SK-N-SH (cell line): ENCODE measurements at regions of chr17 and their contacts with region 1.

Region 1: GRCh38 chr17:28405632-28406472 is at the start of gene SLC46A1:
- DNase-seq: peak; percentile 91
- H3K4me3 ChIP-seq: peak within 1 kb of the TSS; percentile 60 to 88
- H3K27ac ChIP-seq: peak within 1 kb of the TSS; percentile 16 to 56; a peak in 3 of 4 replicates
- H3K4me1 ChIP-seq: peaks cover 10 to 16% of the 10 kb centered on the region in 2 experiments; a peak in 2 of 4 replicates
- H3K27me3 ChIP-seq: no peaks in the 10 kb centered on the region
- CTCF ChIP-seq: no peak
- EP300 ChIP-seq: no peak
- RAD21 ChIP-seq: no peak
- polyA plus RNA-seq, gene SLC46A1: 4.2 and 4.3 TPM in 2 replicates

Region 2: DNA sequence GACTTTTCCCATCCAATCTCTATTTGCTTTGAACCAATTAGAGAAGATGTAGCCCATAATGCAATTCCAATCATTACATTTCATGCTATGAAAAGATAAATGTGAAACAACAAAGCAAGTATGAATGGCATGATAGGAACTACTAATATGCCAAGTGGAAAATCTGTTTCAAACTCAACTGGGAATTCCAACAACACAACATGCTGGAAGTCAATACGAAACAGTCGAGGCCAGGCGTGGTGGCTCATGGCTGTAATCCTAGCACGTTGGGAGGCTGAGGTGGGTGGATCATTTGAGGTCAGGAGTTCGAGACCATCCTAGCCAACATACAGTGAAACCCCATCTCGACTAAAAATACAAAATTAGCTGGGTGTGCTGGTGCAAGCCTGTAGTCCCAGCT is 126.4 kb before region 1 on chr17:
- CTCF ChIA-PET with region 1: no interaction called
- POLR2A ChIA-PET with region 1: no interaction called
- DNase-seq: no peak
- H3K4me3 ChIP-seq: no peak overlapping the region
- H3K27ac ChIP-seq: no peak overlapping the region
- H3K4me1 ChIP-seq: peaks cover 0 to 12% of the 10 kb centered on the region in 2 experiments; a peak in 3 of 4 replicates
- H3K27me3 ChIP-seq: no peaks in the 10 kb centered on the region
- CTCF ChIP-seq: no peak
- EP300 ChIP-seq: no peak
- RAD21 ChIP-seq: no peak

Region 3: DNA sequence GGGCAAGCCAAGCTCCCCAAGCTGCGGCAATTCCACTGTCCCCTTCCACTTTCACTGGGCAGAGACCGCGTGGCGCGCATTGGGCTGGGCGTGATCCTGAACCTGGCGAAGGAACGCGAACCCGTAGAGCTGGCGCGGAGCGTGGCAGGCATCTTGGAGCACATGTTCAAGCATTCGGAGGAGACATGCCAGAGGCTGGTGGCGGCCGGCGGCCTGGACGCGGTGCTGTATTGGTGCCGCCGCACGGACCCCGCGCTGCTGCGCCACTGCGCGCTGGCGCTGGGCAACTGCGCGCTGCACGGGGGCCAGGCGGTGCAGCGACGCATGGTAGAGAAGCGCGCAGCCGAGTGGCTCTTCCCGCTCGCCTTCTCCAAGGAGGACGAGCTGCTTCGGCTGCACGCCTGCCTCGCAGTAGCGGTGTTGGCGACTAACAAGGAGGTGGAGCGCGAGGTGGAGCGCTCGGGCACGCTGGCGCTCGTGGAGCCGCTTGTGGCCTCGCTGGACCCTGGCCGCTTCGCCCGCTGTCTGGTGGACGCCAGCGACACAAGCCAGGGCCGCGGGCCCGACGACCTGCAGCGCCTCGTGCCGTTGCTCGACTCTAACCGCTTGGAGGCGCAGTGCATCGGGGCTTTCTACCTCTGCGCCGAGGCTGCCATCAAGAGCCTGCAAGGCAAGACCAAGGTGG is 24.6 kb before region 1 on chr17:
- CTCF ChIA-PET with region 1: interaction called, 6 read pairs
- POLR2A ChIA-PET with region 1: interaction called, 11 read pairs
- DNase-seq: no peak
- H3K4me3 ChIP-seq: no peak overlapping the region
- H3K27ac ChIP-seq: no peak overlapping the region; a peak in 1 of 4 replicates
- H3K4me1 ChIP-seq: peaks cover 7 to 14% of the 10 kb centered on the region in 2 experiments; a peak in 2 of 4 replicates
- H3K27me3 ChIP-seq: no peaks in the 10 kb centered on the region
- CTCF ChIP-seq: no peak
- EP300 ChIP-seq: no peak
- RAD21 ChIP-seq: no peak

Region 4: DNA sequence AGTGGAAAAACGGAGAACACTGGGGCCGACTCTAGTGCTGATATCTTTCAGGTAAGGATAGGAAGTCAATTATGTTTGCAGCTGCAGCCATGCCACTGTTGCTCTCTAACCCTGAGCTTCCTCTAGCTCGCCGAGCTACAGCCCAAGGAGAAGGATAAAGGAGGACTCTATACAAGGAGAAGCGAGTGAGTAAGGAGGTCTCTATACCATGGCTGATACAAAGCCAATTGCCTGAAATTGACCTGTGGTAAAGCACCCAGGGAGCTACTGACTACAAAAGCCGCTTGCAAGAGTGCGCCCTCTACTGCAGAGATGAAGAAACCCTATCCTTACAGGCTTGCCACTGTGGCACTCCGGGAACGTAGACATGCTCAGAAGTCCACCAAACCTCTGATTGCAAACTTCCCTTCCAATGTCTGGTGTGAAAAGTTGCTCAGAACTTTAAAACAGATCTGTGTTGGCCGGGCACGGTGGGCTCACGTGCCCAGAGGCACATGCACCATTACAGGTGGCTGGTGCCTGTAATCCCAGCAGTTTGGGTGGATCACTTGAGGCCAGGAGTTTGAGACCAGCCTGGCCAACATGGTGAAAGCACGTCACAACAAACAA is 11.0 kb after region 1 on chr17:
- CTCF ChIA-PET with region 1: interaction called, 23 read pairs
- POLR2A ChIA-PET with region 1: interaction called, 5 read pairs
- DNase-seq: peak; percentile 56
- H3K4me3 ChIP-seq: no peak overlapping the region
- H3K27ac ChIP-seq: no peak overlapping the region
- H3K4me1 ChIP-seq: no peaks in the 10 kb centered on the region
- H3K27me3 ChIP-seq: peaks cover 13% of the 10 kb centered on the region; the same call in 1 of the 2 replicates
- CTCF ChIP-seq: peak; percentile 70
- EP300 ChIP-seq: no peak
- RAD21 ChIP-seq: peak; percentile 63